Activated naive CD4-positive, alpha-beta T cell treated with anti-CD3 and anti-CD28 coated beads for 36 hours (primary cell): ENCODE measurements at regions of chr19 and their contacts with region 1.

Region 1: GRCh38 chr19:6737284-6738046 is at the start of gene GPR108:
- DNase-seq: peak; percentile 100
- H3K4me3 Mint-ChIP-seq: peak within 1 kb of the TSS; percentile 98
- H3K27ac Mint-ChIP-seq: peak within 1 kb of the TSS; percentile 98
- H3K4me1 Mint-ChIP-seq: peaks cover 40% of the 10 kb centered on the region
- H3K27me3 Mint-ChIP-seq: no peaks in the 10 kb centered on the region
- total RNA-seq, gene GPR108: 54.0 to 59.9 TPM

Region 2: DNA sequence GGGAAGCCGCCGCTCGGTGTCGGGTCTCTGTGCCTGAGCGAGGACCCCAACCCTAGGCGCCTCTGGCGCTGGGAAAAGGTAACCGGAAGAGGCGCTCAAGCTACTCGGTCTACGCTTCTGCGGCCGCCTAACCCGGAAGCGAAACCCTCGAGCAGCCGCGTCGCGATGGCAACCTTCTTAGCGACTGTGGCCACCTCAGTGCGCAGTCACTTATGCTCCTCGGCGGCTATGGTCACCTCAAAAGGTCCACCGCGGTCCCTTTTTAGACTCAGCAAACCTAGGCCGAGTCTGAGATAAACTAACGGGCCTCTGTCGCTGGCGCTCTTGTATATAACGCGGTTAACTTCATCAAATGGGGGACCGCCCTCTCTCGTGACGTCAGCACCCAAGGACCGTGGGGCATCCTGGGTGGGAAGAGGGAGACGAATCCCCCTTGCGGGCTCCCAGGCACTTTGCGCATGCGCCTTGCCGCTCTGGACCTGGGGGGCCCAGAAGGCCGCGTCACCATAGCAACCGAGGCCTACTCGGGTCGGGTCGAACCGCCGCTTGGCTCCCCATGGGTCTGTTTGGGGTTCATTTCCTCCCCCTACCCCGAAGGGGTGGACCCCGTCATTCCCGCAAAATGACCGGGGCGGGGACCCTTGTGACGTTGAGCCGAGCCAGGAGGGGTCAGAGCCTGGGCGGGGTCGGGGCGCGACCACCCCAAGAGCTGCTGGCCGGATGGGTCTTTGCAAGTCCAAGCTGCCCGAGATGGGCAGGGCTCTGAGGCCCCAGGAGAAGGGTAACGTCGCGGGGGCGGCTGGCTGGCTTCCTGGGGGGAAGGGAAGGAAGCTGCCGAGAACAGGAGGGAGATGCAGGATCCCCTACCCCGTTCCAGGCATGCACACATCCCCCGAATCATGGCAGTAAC is 344.1 kb before region 1 on chr19 and contains the start of gene GTF2F1:
- CTCF ChIA-PET with region 1: no interaction called
- intact Hi-C with region 1: loop called (anchors 1 kb)
- DNase-seq: peak; percentile 95
- H3K4me3 Mint-ChIP-seq: peak within 1 kb of the TSS; percentile 88
- H3K27ac Mint-ChIP-seq: peak within 1 kb of the TSS; percentile 92
- H3K4me1 Mint-ChIP-seq: peaks cover 16% of the 10 kb centered on the region
- H3K27me3 Mint-ChIP-seq: no peaks in the 10 kb centered on the region
- total RNA-seq, gene GTF2F1: 53.5 to 63.0 TPM

Region 3: GRCh38 chr19:6516659-6517291 is 220.7 kb before region 1 on chr19:
- CTCF ChIA-PET with region 1: interaction called, 16 read pairs
- intact Hi-C with region 1: loop called (anchors 1 kb)
- DNase-seq: peak; percentile 96
- H3K4me3 Mint-ChIP-seq: peak overlapping the region; percentile 89
- H3K27ac Mint-ChIP-seq: peak overlapping the region; percentile 80
- H3K4me1 Mint-ChIP-seq: peaks cover 27% of the 10 kb centered on the region
- H3K27me3 Mint-ChIP-seq: no peaks in the 10 kb centered on the region

Region 4: DNA sequence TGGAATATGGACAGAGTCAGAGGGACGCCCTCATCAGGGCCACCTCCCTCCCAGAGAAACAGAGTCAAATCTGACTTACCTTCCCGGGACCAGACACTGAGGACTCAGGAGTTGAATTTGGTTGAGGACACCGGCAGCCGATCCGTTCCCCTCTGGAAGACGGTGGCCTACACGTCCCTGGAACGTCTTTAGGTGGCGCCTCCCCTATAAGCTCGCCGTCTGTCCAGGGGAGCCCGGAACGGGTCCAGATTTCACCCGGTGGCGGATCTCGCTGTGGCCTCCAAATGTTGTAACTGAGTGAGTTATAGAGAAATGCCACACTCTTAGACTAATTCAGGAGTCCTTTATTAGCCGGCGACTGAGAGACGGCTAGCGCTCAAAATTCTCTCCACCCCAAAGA is 76.5 kb before region 1 on chr19:
- CTCF ChIA-PET with region 1: no interaction called
- intact Hi-C with region 1: loop called (anchors 1 kb)
- DNase-seq: no peak
- H3K4me3 Mint-ChIP-seq: peak overlapping the region; percentile 54
- H3K27ac Mint-ChIP-seq: no peak overlapping the region
- H3K4me1 Mint-ChIP-seq: peaks cover 19% of the 10 kb centered on the region
- H3K27me3 Mint-ChIP-seq: no peaks in the 10 kb centered on the region

Region 5: DNA sequence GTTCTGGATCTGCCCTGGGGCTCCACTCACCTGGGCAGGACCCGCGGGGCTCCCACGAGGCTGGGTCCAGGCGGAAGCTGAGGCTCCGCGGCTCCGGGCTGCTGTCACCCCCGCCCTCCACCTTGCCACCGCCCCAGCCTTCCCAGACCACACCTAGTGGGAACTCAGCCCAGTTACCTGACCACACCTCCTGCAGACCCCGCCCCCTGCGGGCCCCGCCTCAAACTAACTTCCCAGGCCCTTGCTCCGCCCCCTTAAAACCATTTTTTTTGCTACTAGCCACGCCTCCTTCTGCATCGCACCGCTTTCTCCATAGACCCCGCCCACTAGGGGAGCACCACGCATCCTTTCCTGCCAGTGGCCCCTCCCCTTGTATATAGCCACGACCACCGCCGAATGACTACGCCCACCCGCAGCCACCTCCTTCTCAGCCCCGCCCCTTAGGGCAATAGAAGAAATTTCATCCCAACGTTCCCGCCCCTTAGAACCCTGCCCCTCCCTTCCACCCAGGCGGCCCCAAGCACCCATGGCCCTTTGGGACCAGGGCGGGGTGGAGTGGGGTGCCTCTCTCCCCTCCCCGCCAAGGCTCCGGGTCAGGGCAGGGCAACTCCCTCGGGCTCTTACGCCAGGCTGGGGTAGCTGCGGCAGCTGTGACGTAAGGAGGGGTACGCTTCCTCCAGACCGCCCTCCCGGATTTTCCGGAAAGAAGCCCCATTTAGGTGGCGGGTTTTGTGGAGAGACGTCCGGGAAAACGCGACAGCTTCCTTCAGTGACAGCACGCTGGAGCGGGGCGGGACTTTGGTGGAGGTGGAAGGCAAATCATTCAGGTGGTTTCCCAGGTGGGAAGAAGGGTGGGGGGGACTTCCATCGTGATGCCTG is 30.1 kb after region 1 on chr19 and contains the start of gene SH2D3A:
- CTCF ChIA-PET with region 1: interaction called, 13 read pairs
- intact Hi-C with region 1: loop called (anchors 1 kb)
- DNase-seq: peak; percentile 98
- H3K4me3 Mint-ChIP-seq: peak within 1 kb of the TSS; percentile 94
- H3K27ac Mint-ChIP-seq: peak within 1 kb of the TSS; percentile 91
- H3K4me1 Mint-ChIP-seq: peaks cover 39% of the 10 kb centered on the region
- H3K27me3 Mint-ChIP-seq: no peaks in the 10 kb centered on the region
- total RNA-seq, gene SH2D3A: 23.2 to 24.9 TPM

Region 6: DNA sequence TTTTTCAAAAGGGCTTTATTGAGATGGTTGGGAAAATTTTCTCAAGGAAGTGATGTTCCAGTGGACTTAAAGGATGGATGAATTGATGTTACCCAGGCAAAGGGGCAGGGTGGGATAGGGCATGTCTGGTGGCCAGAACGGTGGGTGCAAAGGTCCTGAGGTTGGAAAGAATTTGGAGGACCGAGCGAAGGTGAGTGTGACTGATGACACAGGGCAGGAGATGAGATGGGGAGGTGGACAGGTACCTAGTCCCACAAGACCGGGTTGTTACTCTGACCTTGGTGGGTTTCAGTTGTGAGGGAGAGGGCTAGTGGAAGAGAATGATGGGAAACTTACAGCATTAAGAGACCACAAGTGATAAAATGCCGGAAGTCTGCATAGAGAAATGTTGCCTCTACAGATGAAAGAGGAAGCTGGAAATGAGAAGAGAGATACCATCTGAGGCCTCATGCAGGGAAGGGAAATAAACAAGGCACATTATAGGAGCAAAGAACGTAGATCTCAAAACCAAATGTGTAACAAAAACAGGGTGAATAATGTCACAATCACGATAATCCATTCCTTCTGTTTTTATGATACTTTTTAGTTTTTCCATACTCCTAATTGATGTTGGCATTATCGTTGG is 154.4 kb after region 1 on chr19:
- CTCF ChIA-PET with region 1: interaction called, 3 read pairs
- intact Hi-C with region 1: loop called (anchors 1 kb)
- DNase-seq: peak; percentile 22
- H3K4me3 Mint-ChIP-seq: peak overlapping the region; percentile 63
- H3K27ac Mint-ChIP-seq: peak overlapping the region; percentile 93
- H3K4me1 Mint-ChIP-seq: peaks cover 68% of the 10 kb centered on the region
- H3K27me3 Mint-ChIP-seq: no peaks in the 10 kb centered on the region